Psoas muscle (tissue), 8 donors: ENCODE measurements at regions of chr11 and their contacts with region 1.

Region 1: GRCh38 chr11:57131080-57131790 is 50.5 kb upstream of the LRRC55 start:
- DNase-seq: peak in 1 of 2 donors; percentile 23
- ATAC-seq: peak in 2 of 4 donors; percentile 50 to 54
- H3K4me3 ChIP-seq: no peak overlapping the region
- H3K27ac ChIP-seq: no peak overlapping the region
- H3K4me1 ChIP-seq: no peaks in the 10 kb centered on the region
- H3K27me3 ChIP-seq: no peaks in the 10 kb centered on the region
- CTCF ChIP-seq: peak; percentile 49

Region 2: GRCh38 chr11:56841210-56841810 is 289.9 kb before region 1 on chr11:
- intact Hi-C with region 1: loop called in 1 of 2 experiments (anchors 5 kb)
- DNase-seq: peak; percentile 15 to 38
- ATAC-seq: peak in 3 of 4 donors; percentile 47 to 74 (median 64)
- H3K4me3 ChIP-seq: no peak overlapping the region
- H3K27ac ChIP-seq: no peak overlapping the region
- H3K4me1 ChIP-seq: no peaks in the 10 kb centered on the region
- H3K27me3 ChIP-seq: peaks cover 0 to 2% (median 0%) of the 10 kb centered on the region in 3 donors
- CTCF ChIP-seq: peak; percentile 71

Region 3: GRCh38 chr11:57196596-57196995 is 65.4 kb after region 1 on chr11:
- intact Hi-C with region 1: loop called in 1 of 2 experiments (anchors 5 kb)
- DNase-seq: no peak
- ATAC-seq: no peak
- H3K4me3 ChIP-seq: no peak overlapping the region
- H3K27ac ChIP-seq: no peak overlapping the region
- H3K4me1 ChIP-seq: peaks cover 5% of the 10 kb centered on the region
- H3K27me3 ChIP-seq: no peaks in the 10 kb centered on the region
- CTCF ChIP-seq: no peak

Region 4: GRCh38 chr11:57207168-57207567 is 75.9 kb after region 1 on chr11:
- intact Hi-C with region 1: no loop called
- DNase-seq: no peak
- ATAC-seq: no peak
- H3K4me3 ChIP-seq: no peak overlapping the region
- H3K27ac ChIP-seq: no peak overlapping the region
- H3K4me1 ChIP-seq: peaks cover 7% of the 10 kb centered on the region
- H3K27me3 ChIP-seq: peaks cover 0 to 24% (median 0%) of the 10 kb centered on the region in 3 donors
- CTCF ChIP-seq: no peak